ENCODE measurements at regions of chr4 and their contacts with region 1.

Region 1: DNA sequence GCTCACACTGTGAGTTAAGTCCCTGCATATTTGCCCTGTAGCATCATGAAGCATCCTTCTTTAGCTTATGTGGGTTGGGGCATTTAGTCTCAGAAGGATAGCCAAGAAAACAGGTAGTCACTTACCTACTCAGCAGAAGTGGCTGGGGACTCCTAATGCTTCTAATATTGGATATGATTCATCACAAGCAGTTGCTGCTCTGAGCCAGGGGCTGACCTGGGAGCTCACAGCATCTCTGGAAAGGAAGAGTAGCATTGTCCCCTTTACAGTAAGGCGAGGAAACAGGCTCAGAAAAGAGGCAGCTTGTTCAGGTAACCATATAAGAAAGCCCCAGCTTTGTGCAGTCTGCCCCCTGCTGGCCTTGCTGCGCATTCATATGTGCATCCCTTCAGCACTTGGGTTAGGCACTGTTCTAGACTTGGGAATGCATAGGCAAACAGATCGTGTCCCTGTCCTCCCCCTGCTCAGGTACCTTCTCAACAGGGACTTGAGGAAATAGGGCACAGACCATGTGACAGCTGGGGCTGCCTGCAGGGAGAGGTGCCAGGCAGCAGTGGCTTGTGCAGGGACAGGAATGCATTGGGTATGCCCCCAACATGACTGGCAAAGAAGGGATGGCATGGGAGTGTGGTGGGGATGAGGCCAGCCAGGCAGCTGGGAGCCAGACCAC is 35.7 kb upstream of the TBC1D14 start:
- DNase-seq: peak; percentile 43
- H3K4me3 ChIP-seq: no peak overlapping the region
- H3K27ac ChIP-seq: no peak overlapping the region
- H3K4me1 ChIP-seq: peaks cover 21% of the 10 kb centered on the region
- H3K27me3 ChIP-seq: no peaks in the 10 kb centered on the region
- CTCF ChIP-seq: peak; percentile 87 to 98

Region 2: GRCh38 chr4:6546681-6547447 is 327.1 kb before region 1 on chr4:
- CTCF ChIA-PET with region 1: no interaction called
- dilution Hi-C with region 1: no loop called
- in situ Hi-C with region 1: no loop called
- intact Hi-C with region 1: loop called (anchors 5 kb)
- DNase-seq: peak; percentile 28
- H3K4me3 ChIP-seq: no peak overlapping the region
- H3K27ac ChIP-seq: no peak overlapping the region
- H3K4me1 ChIP-seq: no peaks in the 10 kb centered on the region
- H3K27me3 ChIP-seq: no peaks in the 10 kb centered on the region
- CTCF ChIP-seq: peak; percentile 69 to 94

Region 3: DNA sequence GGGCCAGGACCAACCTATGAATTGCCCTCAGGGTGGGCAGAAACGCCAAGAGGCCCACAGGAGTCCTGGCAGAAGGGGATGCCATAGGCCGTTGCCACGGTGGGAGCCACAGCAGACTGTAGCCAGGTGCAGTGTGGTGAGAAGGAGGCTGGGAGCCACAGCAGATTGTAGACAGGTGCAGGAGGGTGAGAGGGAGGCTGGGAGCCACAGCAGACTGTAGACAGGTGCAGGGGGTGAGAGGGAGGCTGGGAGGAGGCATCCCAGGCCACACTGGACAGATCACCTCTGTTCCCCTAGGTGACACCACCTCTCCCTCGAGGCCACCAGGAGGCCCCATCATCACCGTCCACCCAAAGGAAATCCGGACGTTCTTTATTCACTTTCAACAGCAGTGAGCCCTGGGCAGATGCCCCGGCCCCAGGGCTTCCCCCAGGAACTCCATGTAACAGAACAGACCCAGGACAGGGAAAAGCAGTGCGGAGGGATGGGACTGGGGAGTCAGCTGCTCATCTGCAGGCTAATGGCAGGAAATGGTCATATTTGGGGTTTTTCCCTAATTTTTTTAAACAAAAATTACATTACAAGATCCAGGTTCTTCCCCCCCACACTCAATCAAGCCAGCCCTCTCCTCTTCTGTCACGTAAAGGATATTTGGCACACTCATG is 252.9 kb before region 1 on chr4:
- CTCF ChIA-PET with region 1: no interaction called
- dilution Hi-C with region 1: no loop called
- in situ Hi-C with region 1: no loop called
- intact Hi-C with region 1: no loop called
- DNase-seq: no peak
- H3K4me3 ChIP-seq: no peak overlapping the region
- H3K27ac ChIP-seq: no peak overlapping the region
- H3K4me1 ChIP-seq: no peaks in the 10 kb centered on the region
- H3K27me3 ChIP-seq: no peaks in the 10 kb centered on the region
- CTCF ChIP-seq: no peak

Region 4: GRCh38 chr4:6673660-6674499 is 200.0 kb before region 1 on chr4:
- CTCF ChIA-PET with region 1: no interaction called
- dilution Hi-C with region 1: no loop called
- in situ Hi-C with region 1: no loop called
- intact Hi-C with region 1: loop called (anchors 1 kb)
- DNase-seq: peak; percentile 88
- H3K4me3 ChIP-seq: peak overlapping the region; percentile 62 to 72 (median 65)
- H3K27ac ChIP-seq: peak overlapping the region; percentile 31
- H3K4me1 ChIP-seq: peaks cover 26% of the 10 kb centered on the region
- H3K27me3 ChIP-seq: no peaks in the 10 kb centered on the region
- CTCF ChIP-seq: no peak

Region 5: GRCh38 chr4:6761649-6762602 is 112.0 kb before region 1 on chr4:
- CTCF ChIA-PET with region 1: no interaction called
- dilution Hi-C with region 1: no loop called
- in situ Hi-C with region 1: no loop called
- intact Hi-C with region 1: loop called (anchors 1 kb)
- DNase-seq: no peak
- H3K4me3 ChIP-seq: no peak overlapping the region
- H3K27ac ChIP-seq: no peak overlapping the region
- H3K4me1 ChIP-seq: peaks cover 27% of the 10 kb centered on the region
- H3K27me3 ChIP-seq: peaks cover 3% of the 10 kb centered on the region
- CTCF ChIP-seq: no peak

Region 6: GRCh38 chr4:6783053-6783981 is 90.6 kb before region 1 on chr4:
- CTCF ChIA-PET with region 1: interaction called, 3 read pairs
- dilution Hi-C with region 1: no loop called
- in situ Hi-C with region 1: no loop called
- intact Hi-C with region 1: loop called (anchors 1 kb)
- DNase-seq: peak; percentile 82
- H3K4me3 ChIP-seq: peak overlapping the region; percentile 85 to 91 (median 86)
- H3K27ac ChIP-seq: peak overlapping the region; percentile 65
- H3K4me1 ChIP-seq: peaks cover 3% of the 10 kb centered on the region
- H3K27me3 ChIP-seq: no peaks in the 10 kb centered on the region
- CTCF ChIP-seq: peak in 1 of 2 donors; percentile 27

Region 7: DNA sequence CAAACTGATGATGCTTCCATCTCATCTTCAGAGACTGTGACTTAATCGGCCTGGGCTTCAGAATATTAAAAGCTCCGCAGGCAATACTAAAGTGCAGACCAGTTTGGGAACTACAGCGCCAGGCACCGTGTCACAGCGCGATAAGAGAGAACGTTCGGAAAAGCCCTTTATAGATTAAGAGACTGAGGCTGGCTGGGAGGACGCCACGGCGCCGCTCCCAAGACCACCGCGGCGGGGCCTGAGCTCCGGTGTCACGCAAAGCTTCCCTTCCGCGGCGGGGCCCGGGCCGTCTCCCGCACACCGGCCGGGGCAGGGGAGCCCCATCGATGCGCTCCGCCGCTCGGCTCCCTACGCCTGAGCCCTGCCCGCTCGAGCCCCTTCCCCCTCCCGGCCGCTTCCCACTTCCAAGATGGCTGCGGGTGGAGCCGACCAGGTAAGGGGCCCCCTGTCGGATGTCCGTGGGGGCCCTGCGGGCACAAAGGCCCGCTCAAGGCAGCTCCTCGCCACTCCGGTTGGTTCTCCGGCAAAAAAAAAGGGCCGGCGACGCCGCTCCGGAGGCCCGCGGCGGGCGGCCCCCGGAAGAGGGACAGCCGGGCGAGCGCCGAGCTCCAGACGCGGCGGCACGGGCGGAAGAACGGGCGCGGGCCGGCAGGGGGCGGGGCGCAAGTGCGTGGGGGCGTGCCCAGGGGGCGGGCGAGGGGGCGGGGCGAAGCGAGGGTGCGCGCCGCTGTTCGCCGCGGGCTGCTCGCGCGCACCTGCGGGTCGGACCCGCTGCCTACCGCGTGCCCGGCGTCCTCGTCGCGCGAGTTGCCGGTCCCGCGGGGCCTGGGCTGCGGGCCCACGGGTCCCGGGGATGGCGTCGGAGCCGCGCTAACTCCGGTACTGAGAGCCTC is 35.4 kb after region 1 on chr4 and contains the start of gene TBC1D14:
- CTCF ChIA-PET with region 1: no interaction called
- dilution Hi-C with region 1: loop called (anchors 5 kb)
- in situ Hi-C with region 1: no loop called
- intact Hi-C with region 1: no loop called
- DNase-seq: peak; percentile 81
- H3K4me3 ChIP-seq: peak within 1 kb of the TSS; percentile 61 to 94 (median 77)
- H3K27ac ChIP-seq: peak within 1 kb of the TSS; percentile 89
- H3K4me1 ChIP-seq: peaks cover 18% of the 10 kb centered on the region
- H3K27me3 ChIP-seq: no peaks in the 10 kb centered on the region
- CTCF ChIP-seq: peak in 1 of 2 donors; percentile 27
- total RNA-seq, gene TBC1D14: 62.9 to 89.5 TPM

Measured in mammary epithelial cell (primary cell).